ENCODE measurements at regions of chr5 and their contacts with region 1.

Region 1: DNA sequence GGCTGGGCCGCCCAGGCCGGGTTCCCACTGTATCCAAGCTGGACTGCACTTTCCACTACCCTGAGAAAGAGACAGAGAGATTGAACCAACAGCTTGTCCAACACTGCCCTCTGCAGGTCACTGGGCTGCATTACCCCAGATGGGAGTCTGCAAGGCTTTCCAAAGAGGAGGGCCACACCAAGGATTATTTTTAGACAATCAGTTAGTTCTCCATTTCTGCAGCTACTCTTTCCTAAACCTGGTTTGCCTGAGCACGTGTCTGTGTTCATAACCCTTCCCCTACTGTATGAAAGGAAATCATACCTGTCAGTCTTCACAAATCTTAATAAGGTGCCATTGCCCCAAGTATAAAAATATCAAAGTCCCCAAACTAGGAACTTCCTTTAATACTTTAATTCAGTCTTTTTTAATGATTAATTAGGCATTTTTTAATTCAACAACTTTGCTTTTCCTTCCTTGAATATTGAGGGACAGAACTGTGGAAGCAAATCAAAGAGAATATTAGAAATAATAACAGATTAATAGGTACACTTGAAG is 13.4 kb upstream of the FGF1 start:
- DNase-seq: peak; percentile 88
- ATAC-seq: peak; percentile 94
- H3K4me3 Mint-ChIP-seq: no peak overlapping the region
- H3K27ac Mint-ChIP-seq: no peak overlapping the region
- H3K4me1 Mint-ChIP-seq: no peaks in the 10 kb centered on the region
- H3K27me3 Mint-ChIP-seq: no peaks in the 10 kb centered on the region

Region 2: DNA sequence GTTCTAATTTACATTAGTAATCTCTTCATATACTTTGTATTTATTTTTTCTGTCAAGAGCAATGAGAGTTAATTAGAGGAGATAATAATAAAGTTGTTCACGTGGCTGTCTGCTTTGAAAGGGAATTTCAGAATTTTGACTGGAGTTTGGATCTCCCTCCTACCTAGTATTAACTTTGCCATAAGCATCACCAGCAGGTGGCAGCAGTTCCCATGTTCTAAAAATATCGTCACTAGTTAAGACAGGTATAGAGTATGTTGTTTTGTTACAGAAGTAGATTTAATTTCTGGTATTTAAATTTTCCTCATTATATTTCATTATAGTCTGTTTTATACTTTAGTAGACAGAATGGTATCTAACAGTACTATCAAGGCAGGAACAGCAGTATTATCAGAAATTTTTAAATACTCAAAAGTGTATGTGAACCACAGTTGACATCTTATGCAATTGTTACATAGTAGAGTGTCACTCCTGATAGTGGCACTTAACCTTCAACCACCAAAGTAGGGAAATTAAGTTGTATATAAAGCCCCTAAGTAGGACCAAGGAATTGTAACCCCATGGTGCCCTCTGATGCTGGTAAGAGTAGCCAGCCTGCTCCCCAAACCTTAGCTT is 706.8 kb before region 1 on chr5:
- CTCF ChIA-PET with region 1: interaction called, 4 read pairs
- POLR2A ChIA-PET with region 1: no interaction called
- intact Hi-C with region 1: loop called in 1 of 2 experiments (anchors 1 kb)
- DNase-seq: peak; percentile 89
- ATAC-seq: peak; percentile 88
- H3K4me3 Mint-ChIP-seq: no peak overlapping the region
- H3K27ac Mint-ChIP-seq: peak overlapping the region; percentile 19
- H3K4me1 Mint-ChIP-seq: no peaks in the 10 kb centered on the region
- H3K27me3 Mint-ChIP-seq: no peaks in the 10 kb centered on the region

Region 3: GRCh38 chr5:142587354-142587965 is 111.8 kb before region 1 on chr5:
- CTCF ChIA-PET with region 1: interaction called, 6 read pairs
- POLR2A ChIA-PET with region 1: no interaction called
- intact Hi-C with region 1: loop called in 1 of 2 experiments (anchors 1 kb)
- DNase-seq: peak; percentile 63
- ATAC-seq: no peak
- H3K4me3 Mint-ChIP-seq: no peak overlapping the region
- H3K27ac Mint-ChIP-seq: no peak overlapping the region
- H3K4me1 Mint-ChIP-seq: peaks cover 6% of the 10 kb centered on the region
- H3K27me3 Mint-ChIP-seq: peaks cover 9% of the 10 kb centered on the region

Region 4: DNA sequence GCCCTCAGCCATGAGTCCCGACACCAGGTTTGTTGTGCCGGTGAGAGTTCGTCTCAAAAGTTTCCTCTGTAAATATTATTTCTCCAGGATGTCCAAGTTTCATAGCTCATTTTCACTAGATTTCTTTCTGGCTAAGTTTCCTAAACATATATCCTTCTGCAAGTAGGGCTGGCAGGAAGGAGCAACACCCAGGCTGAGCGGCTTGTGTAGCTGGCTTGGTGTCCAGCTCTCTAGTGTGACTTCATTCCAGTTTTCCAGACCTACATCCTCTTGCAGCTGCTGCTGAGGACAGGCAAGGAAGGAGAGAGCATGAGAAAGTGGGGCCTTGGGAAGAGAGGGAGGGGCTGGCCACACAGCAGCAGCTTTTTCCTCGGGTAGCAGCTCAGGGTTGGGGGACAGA is 93.6 kb before region 1 on chr5:
- CTCF ChIA-PET with region 1: interaction called, 22 read pairs
- POLR2A ChIA-PET with region 1: no interaction called
- intact Hi-C with region 1: no loop called
- DNase-seq: no peak
- ATAC-seq: no peak
- H3K4me3 Mint-ChIP-seq: no peak overlapping the region
- H3K27ac Mint-ChIP-seq: no peak overlapping the region
- H3K4me1 Mint-ChIP-seq: no peaks in the 10 kb centered on the region
- H3K27me3 Mint-ChIP-seq: peaks cover 5% of the 10 kb centered on the region

Region 5: DNA sequence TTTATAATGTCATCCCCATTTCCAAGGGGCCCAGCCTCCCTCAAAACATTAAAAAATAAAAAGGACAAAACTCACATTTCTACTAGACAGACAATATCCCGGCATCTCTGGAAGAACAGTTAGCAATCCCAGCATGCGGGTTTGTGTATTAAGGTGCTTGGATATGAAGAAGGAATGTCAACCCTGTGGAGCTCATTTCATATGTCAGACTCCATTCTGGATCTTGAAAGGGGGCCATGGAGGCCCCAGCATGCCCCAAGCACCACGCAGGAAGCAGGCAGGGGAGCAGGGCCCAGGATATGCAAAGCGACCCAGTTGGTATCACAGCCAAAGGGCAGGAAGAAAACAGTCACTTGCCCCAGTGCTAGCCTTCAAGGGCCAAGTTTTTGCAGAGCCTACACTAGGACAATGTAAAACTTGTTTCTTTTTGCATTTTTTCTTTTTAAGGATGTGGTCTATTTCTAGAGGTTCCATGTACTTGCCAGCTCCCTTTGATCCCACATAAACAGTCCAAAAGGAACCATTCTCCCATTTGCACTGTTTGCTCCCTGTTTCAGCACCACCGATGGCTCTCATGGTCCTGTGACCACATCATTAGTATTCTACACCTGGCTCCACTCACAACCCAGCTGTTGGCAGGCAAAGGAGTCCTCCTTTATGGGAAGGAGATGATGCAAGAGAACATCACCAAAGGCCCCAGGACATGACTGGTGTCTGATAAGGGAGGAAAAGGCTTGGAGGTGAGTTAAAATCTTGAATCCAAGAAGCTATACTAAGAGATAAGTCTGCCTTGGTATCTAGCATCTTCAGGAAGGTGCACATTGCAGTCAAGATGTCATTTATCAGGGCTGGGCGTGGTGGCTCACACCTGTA is 71.6 kb before region 1 on chr5:
- CTCF ChIA-PET with region 1: interaction called, 10 read pairs
- POLR2A ChIA-PET with region 1: no interaction called
- intact Hi-C with region 1: no loop called
- DNase-seq: no peak
- ATAC-seq: no peak
- H3K4me3 Mint-ChIP-seq: no peak overlapping the region
- H3K27ac Mint-ChIP-seq: no peak overlapping the region
- H3K4me1 Mint-ChIP-seq: no peaks in the 10 kb centered on the region
- H3K27me3 Mint-ChIP-seq: no peaks in the 10 kb centered on the region

Region 6: GRCh38 chr5:142655339-142656267 is 43.6 kb before region 1 on chr5:
- CTCF ChIA-PET with region 1: interaction called, 80 read pairs
- POLR2A ChIA-PET with region 1: no interaction called
- intact Hi-C with region 1: loop called (anchors 1 kb)
- DNase-seq: peak; percentile 86
- ATAC-seq: peak; percentile 97
- H3K4me3 Mint-ChIP-seq: no peak overlapping the region
- H3K27ac Mint-ChIP-seq: no peak overlapping the region
- H3K4me1 Mint-ChIP-seq: peaks cover 4% of the 10 kb centered on the region
- H3K27me3 Mint-ChIP-seq: peaks cover 2% of the 10 kb centered on the region

Region 7: GRCh38 chr5:142720641-142721271 is 21.5 kb after region 1 on chr5:
- CTCF ChIA-PET with region 1: interaction called, 40 read pairs
- POLR2A ChIA-PET with region 1: interaction called, 3 read pairs
- intact Hi-C with region 1: no loop called
- DNase-seq: no peak
- ATAC-seq: no peak
- H3K4me3 Mint-ChIP-seq: no peak overlapping the region
- H3K27ac Mint-ChIP-seq: no peak overlapping the region
- H3K4me1 Mint-ChIP-seq: peaks cover 5% of the 10 kb centered on the region
- H3K27me3 Mint-ChIP-seq: no peaks in the 10 kb centered on the region

Region 8: GRCh38 chr5:143290125-143290524 is 590.9 kb after region 1 on chr5:
- CTCF ChIA-PET with region 1: no interaction called
- POLR2A ChIA-PET with region 1: no interaction called
- intact Hi-C with region 1: no loop called
- DNase-seq: no peak
- ATAC-seq: no peak
- H3K4me3 Mint-ChIP-seq: no peak overlapping the region
- H3K27ac Mint-ChIP-seq: no peak overlapping the region
- H3K4me1 Mint-ChIP-seq: peaks cover 3% of the 10 kb centered on the region
- H3K27me3 Mint-ChIP-seq: no peaks in the 10 kb centered on the region

Measured in activated CD4-positive, alpha-beta T cell treated with anti-CD3 and anti-CD28 coated beads for 36 hours (primary cell).